T-cell (primary cell): ENCODE measurements at regions of chr15 and their contacts with region 1.

Region 1: GRCh38 chr15:35768949-35769348 is 223.0 kb upstream of the DPH6 start:
- DNase-seq: no peak
- ATAC-seq: no peak
- H3K4me3 ChIP-seq: no peak overlapping the region
- H3K4me3 Mint-ChIP-seq: no peak overlapping the region
- H3K27ac ChIP-seq: no peak overlapping the region
- H3K27ac Mint-ChIP-seq: no peak overlapping the region
- H3K4me1 ChIP-seq: no peaks in the 10 kb centered on the region
- H3K4me1 Mint-ChIP-seq: no peaks in the 10 kb centered on the region
- H3K27me3 ChIP-seq: no peaks in the 10 kb centered on the region
- H3K27me3 Mint-ChIP-seq: peaks cover 0 to 4% of the 10 kb centered on the region in 2 donors

Region 2: DNA sequence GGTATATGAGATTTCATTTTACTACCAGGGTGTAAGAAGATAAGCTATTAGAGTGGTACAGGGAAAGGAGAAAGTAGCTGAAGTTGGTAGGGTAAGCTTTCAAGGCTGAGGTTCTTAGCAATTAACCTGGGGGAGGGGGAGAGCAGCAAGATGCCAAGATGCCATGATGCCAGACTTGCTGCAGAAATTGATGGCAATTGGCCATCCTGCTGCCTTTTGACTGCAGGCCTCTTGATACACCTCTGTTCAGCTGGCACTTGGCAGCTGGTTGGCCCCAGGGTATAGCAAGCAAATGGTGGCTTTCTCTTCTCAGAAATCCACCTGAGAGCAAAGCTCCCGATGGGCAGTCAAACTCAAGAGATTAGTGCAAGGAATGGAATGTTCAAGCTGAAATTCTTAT is 201.6 kb before region 1 on chr15:
- CTCF ChIA-PET with region 1: no interaction called
- POLR2A ChIA-PET with region 1: no interaction called
- DNase-seq: no peak
- ATAC-seq: no peak
- H3K4me3 ChIP-seq: no peak overlapping the region
- H3K4me3 Mint-ChIP-seq: no peak overlapping the region
- H3K27ac ChIP-seq: no peak overlapping the region
- H3K27ac Mint-ChIP-seq: no peak overlapping the region
- H3K4me1 ChIP-seq: no peaks in the 10 kb centered on the region
- H3K4me1 Mint-ChIP-seq: no peaks in the 10 kb centered on the region
- H3K27me3 ChIP-seq: no peaks in the 10 kb centered on the region
- H3K27me3 Mint-ChIP-seq: peaks cover 7 to 8% of the 10 kb centered on the region in 2 donors

Region 3: GRCh38 chr15:36757189-36757814 is 988.4 kb after region 1 on chr15:
- CTCF ChIA-PET with region 1: no interaction called
- POLR2A ChIA-PET with region 1: interaction called in 1 of 2 experiments, 12 read pairs
- DNase-seq: no peak
- ATAC-seq: no peak
- H3K4me3 ChIP-seq: no peak overlapping the region
- H3K4me3 Mint-ChIP-seq: no peak overlapping the region
- H3K27ac ChIP-seq: no peak overlapping the region
- H3K27ac Mint-ChIP-seq: no peak overlapping the region
- H3K4me1 ChIP-seq: no peaks in the 10 kb centered on the region
- H3K4me1 Mint-ChIP-seq: no peaks in the 10 kb centered on the region
- H3K27me3 ChIP-seq: no peaks in the 10 kb centered on the region
- H3K27me3 Mint-ChIP-seq: no peaks in the 10 kb centered on the region